Caco-2 (cell line): ENCODE measurements at regions of chr11 and their contacts with region 1.

Region 1: DNA sequence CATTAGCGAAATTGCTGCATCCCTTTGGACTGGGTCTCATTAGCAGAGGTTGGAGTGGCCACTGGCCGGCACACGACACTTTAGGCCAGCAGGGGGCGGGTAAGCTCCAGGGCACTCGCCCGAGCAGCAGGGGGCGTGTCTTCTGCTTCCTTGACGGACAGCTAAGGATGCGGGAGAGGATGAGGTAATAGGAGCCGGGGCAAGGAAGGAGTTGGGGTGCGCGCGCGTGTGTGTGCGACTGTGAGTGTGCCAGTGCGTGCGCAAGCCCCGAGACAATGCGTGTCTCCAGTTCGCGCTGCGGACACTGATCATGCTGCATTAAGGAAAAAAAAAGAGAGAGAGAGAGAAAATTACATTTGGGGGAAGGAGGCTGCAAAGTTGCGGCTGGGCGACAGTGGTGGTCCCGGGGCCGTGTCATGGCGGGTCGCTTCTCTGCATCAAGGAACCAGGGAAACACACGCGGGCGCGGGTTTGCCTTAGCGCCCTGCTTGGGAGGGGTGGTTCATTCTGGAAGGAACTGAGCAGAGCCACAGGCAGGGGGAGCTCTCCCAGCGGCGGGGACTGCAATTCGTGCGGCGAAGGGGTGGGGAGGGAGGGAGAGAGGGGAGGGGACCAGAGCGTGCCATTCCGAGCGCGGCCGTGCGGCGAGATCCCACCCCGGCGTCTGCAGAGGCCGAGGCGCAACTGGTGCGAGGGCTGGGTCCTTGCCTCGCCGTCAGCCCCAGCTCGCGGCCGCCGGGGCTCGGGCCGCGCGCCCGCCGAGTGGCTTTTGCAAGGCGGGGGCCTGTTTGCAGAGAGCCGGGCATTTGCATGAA is at the start of gene DTX4:
- DNase-seq: peak; percentile 95
- H3K4me3 ChIP-seq: peak within 1 kb of the TSS; percentile 52
- H3K4me3 Mint-ChIP-seq: peak within 1 kb of the TSS; percentile 74
- H3K27ac Mint-ChIP-seq: peak within 1 kb of the TSS; percentile 73
- H3K4me1 ChIP-seq: peaks cover 21% of the 10 kb centered on the region
- H3K4me1 Mint-ChIP-seq: peaks cover 12% of the 10 kb centered on the region
- H3K27me3 ChIP-seq: no peaks in the 10 kb centered on the region
- H3K27me3 Mint-ChIP-seq: no peaks in the 10 kb centered on the region
- CTCF ChIP-seq: peak; percentile 88 to 97
- total RNA-seq, gene DTX4: 85.6 and 96.7 TPM in 2 replicates

Region 2: DNA sequence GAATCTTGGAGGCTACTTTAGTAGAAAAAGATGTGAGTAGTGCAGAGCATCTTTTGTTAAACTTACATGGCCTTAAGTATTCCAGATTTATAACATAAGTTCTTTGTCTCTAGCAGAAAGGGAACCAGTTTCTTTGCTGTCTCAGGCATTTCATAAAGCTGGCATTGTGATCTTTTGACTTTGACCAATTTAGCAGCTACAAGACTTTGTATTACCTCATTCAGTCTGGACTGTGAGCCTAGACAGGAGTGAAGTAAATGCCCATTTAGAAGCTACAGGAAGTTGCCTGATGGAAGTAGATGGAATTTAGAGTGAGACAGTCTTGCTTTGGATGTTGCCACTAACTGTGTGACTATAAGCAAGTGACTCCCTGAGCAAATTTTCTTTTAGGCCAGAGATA is 414.3 kb before region 1 on chr11:
- CTCF ChIA-PET with region 1: no interaction called
- POLR2A ChIA-PET with region 1: no interaction called
- intact Hi-C with region 1: no loop called
- DNase-seq: no peak
- H3K4me3 ChIP-seq: no peak overlapping the region
- H3K4me3 Mint-ChIP-seq: no peak overlapping the region
- H3K27ac Mint-ChIP-seq: no peak overlapping the region
- H3K4me1 ChIP-seq: peaks cover 2% of the 10 kb centered on the region
- H3K4me1 Mint-ChIP-seq: peaks cover 5% of the 10 kb centered on the region
- H3K27me3 ChIP-seq: no peaks in the 10 kb centered on the region
- H3K27me3 Mint-ChIP-seq: no peaks in the 10 kb centered on the region
- CTCF ChIP-seq: no peak

Region 3: GRCh38 chr11:59158206-59159068 is 13.3 kb before region 1 on chr11:
- CTCF ChIA-PET with region 1: interaction called, 30 read pairs
- POLR2A ChIA-PET with region 1: interaction called, 7 read pairs
- intact Hi-C with region 1: no loop called
- DNase-seq: peak; percentile 68 to 78
- H3K4me3 ChIP-seq: no peak overlapping the region
- H3K4me3 Mint-ChIP-seq: no peak overlapping the region
- H3K27ac Mint-ChIP-seq: no peak overlapping the region
- H3K4me1 ChIP-seq: peaks cover 16% of the 10 kb centered on the region
- H3K4me1 Mint-ChIP-seq: peaks cover 16% of the 10 kb centered on the region
- H3K27me3 ChIP-seq: no peaks in the 10 kb centered on the region
- H3K27me3 Mint-ChIP-seq: peaks cover 10% of the 10 kb centered on the region
- CTCF ChIP-seq: peak; percentile 80 to 84

Region 4: DNA sequence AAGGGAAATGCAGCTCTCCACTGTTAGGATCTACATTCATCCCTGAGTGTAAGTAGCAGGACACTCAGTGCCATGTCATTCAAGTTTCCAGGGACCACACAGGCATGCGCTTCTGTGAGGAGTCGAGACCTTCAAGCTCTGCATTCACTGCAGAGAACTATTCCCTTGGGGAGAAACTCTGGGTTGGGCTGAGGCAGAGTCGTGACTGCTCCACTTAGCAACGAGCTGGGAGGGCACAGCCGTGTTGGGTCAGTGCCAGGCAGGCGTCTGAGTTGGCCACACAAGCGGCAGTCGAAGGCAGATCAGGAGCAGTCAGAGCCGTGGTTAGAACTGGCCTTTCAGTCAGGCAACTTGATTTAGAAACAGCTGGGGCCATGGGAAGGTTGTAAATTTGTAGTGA is 26.3 kb after region 1 on chr11:
- CTCF ChIA-PET with region 1: interaction called, 20 read pairs
- POLR2A ChIA-PET with region 1: interaction called, 5 read pairs
- intact Hi-C with region 1: loop called (anchors 1 kb)
- DNase-seq: no peak
- H3K4me3 ChIP-seq: no peak overlapping the region
- H3K4me3 Mint-ChIP-seq: no peak overlapping the region
- H3K27ac Mint-ChIP-seq: peak overlapping the region; percentile 36
- H3K4me1 ChIP-seq: peaks cover 6% of the 10 kb centered on the region
- H3K4me1 Mint-ChIP-seq: peaks cover 27% of the 10 kb centered on the region
- H3K27me3 ChIP-seq: no peaks in the 10 kb centered on the region
- H3K27me3 Mint-ChIP-seq: no peaks in the 10 kb centered on the region
- CTCF ChIP-seq: no peak

Region 5: DNA sequence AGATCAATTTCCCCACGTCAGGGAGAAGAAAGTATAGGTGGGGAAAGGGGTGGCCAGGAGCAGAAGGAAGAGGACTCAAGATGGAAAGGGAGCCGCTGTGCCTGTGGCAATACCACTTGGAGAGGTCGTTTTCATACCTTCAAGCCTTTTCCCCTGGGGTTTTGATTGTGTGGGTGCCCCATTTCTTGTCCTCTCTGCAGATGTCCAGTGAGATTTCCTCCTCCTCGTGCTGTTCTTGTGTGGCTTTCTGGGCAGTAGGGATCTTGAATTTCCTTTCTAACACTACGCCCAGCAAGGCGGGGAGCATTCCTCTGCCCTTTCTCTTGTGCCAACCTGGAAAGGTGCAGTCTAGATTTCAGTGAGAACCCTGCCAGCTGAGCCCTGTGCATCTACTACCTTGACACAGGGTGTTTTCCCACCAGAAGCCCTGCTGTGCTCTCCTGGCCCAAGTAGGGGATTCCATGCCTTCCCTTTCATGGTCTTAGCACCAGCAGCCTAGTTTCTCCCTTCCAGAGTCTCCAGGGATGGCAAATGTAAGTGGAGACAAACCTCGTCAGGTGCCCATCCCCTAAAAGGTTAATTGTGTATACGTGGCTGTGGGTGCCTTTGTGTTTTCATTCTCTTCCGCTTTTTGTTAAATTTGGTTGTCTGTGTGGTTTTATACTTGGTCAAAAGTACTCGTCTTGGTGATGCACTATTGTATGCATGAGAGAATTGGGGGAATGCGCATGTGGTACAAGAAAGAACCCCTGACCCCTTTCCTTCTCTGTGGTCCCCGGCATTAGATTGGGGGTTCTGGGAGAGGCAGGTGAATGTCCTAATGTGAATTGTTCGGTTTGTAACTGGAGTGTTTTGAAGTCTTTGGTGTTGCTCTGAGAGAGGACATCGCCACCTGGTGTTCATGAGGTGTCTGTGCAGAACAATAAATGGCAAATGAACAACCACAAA is 112.4 kb after region 1 on chr11:
- CTCF ChIA-PET with region 1: interaction called, 5 read pairs
- POLR2A ChIA-PET with region 1: no interaction called
- intact Hi-C with region 1: loop called (anchors 1 kb)
- DNase-seq: peak in 1 of 2 experiments; percentile 47
- H3K4me3 ChIP-seq: no peak overlapping the region
- H3K4me3 Mint-ChIP-seq: no peak overlapping the region
- H3K27ac Mint-ChIP-seq: no peak overlapping the region
- H3K4me1 ChIP-seq: no peaks in the 10 kb centered on the region
- H3K4me1 Mint-ChIP-seq: no peaks in the 10 kb centered on the region
- H3K27me3 ChIP-seq: no peaks in the 10 kb centered on the region
- H3K27me3 Mint-ChIP-seq: peaks cover 5% of the 10 kb centered on the region
- CTCF ChIP-seq: peak; percentile 84 to 88

Region 6: GRCh38 chr11:59550368-59550841 is 378.7 kb after region 1 on chr11:
- CTCF ChIA-PET with region 1: no interaction called
- POLR2A ChIA-PET with region 1: no interaction called
- intact Hi-C with region 1: loop called (anchors 10 kb)
- DNase-seq: peak; percentile 96 to 97
- H3K4me3 ChIP-seq: peak overlapping the region; percentile 58
- H3K4me3 Mint-ChIP-seq: peak overlapping the region; percentile 80
- H3K27ac Mint-ChIP-seq: peak overlapping the region; percentile 100
- H3K4me1 ChIP-seq: peaks cover 28% of the 10 kb centered on the region
- H3K4me1 Mint-ChIP-seq: peaks cover 32% of the 10 kb centered on the region
- H3K27me3 ChIP-seq: no peaks in the 10 kb centered on the region
- H3K27me3 Mint-ChIP-seq: peaks cover 7% of the 10 kb centered on the region
- CTCF ChIP-seq: peak; percentile 28 to 63